ENCODE measurements at regions of chr9 and their contacts with region 1.

Region 1: GRCh38 chr9:2234371-2234893 is 219.3 kb downstream of the SMARCA2 start:
- DNase-seq: no peak
- ATAC-seq: peak; percentile 84

Region 2: DNA sequence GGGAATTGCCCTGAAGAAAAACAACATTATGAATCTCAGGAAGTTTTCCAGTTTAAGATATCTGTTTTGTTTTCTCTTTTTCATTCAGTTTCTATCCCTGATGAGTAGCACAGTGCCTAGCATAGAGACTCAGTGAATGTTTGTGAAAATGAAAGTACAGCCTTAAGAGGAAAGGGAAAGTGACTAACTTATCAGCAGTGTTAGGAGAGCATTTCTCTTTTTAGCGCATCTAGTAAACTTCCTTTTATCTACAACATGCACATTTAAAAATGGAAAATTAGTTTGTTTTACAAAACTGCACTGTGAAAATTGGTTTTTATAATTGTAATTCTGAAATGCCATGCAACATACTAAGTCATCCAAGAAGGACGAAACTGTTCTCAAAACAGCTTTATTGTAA is 108.5 kb before region 1 on chr9:
- intact Hi-C with region 1: loop called (anchors 10 kb)
- DNase-seq: no peak
- ATAC-seq: peak; percentile 57

Region 3: DNA sequence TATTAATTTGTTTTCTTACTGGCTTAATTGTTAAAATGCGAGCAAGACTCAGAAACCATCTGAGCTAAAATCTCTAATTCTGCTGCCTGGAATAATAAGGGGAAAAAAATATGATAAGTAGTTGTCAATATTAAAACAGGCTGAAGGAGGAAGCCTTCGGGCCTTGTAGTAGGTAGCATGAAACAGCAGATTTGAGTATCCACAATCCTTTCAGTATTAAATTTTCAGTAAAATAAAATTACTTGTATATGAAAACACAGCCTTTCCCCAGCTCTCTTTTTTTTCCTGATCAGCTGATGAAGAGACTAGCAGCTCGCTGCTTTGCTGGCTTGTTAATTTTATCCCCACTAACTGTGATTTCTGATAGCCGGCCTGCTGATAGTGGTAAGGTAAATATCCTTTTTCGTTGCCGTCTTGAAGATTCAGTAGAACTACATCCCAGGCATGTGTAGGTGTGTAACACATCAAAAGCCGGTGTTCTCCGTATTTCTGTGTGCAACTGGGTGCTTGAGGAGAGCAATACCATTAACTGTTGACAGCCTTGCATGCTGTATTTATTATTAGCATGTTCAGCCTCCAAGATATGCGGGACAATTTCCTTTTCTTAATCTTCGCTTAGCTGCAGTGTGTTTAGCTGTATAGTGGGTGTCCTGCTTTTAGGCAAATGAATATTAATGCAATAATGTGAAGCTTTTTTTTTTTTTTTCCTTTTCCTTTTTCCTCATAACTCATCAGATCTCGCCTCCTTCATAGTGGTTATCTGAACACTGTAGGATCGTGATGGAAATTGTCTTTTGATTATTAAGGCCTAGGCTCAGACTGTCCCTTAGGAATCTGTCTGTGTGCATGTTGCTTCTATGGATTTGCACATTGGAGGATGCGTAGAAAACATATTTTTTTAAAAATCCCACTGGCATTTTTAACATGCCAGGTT is 74.6 kb before region 1 on chr9:
- intact Hi-C with region 1: loop called (anchors 10 kb)
- DNase-seq: no peak
- ATAC-seq: peak; percentile 45

Measured in Right ventricle myocardium superior (tissue), 1 donor.